ENCODE measurements at regions of chr17 and their contacts with region 1.

Region 1: GRCh38 chr17:52106638-52107261 is 51.8 kb downstream of the CA10 start:
- ATAC-seq: peak in 3 of 8 experiments; percentile 23 to 54 (median 31)
- H3K4me3 ChIP-seq: no peak overlapping the region
- H3K27ac ChIP-seq: no peak overlapping the region
- H3K4me1 ChIP-seq: peaks cover 0 to 3% of the 10 kb centered on the region in 2 donors

Region 2: DNA sequence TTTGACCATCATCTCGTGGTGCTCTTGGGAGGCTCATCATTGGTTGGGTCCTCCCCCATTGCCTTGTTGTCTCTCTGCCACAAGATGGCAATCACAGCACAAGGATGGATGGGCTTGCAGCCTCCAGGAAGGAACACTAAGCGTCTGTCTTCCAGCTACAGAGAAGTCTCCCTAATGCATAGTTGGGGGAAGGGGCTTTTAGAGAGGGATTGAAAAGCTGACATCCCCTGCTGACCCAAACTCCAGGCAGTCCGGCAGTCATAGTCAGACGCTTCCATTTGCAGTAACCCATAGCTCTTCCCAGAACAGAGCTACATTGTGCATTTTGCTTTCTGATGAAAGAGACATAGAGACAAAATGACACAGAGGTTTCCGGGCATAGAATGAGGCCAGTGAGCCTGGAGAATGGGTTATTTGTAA is 735.0 kb before region 1 on chr17:
- in situ Hi-C with region 1: loop called in 1 of 9 experiments (anchors 25 kb)
- ATAC-seq: peak; percentile 87 to 96 (median 94)
- H3K4me3 ChIP-seq: no peak overlapping the region
- H3K27ac ChIP-seq: no peak overlapping the region
- H3K4me1 ChIP-seq: peaks cover 6% of the 10 kb centered on the region in 2 donors

Region 3: GRCh38 chr17:51764387-51764972 is 342.3 kb before region 1 on chr17:
- in situ Hi-C with region 1: loop called in 2 of 9 experiments (anchors 25 kb)
- ATAC-seq: peak; percentile 70 to 98 (median 90)
- H3K4me3 ChIP-seq: no peak overlapping the region
- H3K27ac ChIP-seq: no peak overlapping the region
- H3K4me1 ChIP-seq: peaks cover 6 to 46% of the 10 kb centered on the region in 2 donors

Region 4: GRCh38 chr17:52035336-52035915 is 71.3 kb before region 1 on chr17:
- in situ Hi-C with region 1: no loop called
- ATAC-seq: peak in 1 of 8 experiments; percentile 12
- H3K4me3 ChIP-seq: no peak overlapping the region
- H3K27ac ChIP-seq: no peak overlapping the region
- H3K4me1 ChIP-seq: peaks cover 0 to 3% of the 10 kb centered on the region in 2 donors

Region 5: DNA sequence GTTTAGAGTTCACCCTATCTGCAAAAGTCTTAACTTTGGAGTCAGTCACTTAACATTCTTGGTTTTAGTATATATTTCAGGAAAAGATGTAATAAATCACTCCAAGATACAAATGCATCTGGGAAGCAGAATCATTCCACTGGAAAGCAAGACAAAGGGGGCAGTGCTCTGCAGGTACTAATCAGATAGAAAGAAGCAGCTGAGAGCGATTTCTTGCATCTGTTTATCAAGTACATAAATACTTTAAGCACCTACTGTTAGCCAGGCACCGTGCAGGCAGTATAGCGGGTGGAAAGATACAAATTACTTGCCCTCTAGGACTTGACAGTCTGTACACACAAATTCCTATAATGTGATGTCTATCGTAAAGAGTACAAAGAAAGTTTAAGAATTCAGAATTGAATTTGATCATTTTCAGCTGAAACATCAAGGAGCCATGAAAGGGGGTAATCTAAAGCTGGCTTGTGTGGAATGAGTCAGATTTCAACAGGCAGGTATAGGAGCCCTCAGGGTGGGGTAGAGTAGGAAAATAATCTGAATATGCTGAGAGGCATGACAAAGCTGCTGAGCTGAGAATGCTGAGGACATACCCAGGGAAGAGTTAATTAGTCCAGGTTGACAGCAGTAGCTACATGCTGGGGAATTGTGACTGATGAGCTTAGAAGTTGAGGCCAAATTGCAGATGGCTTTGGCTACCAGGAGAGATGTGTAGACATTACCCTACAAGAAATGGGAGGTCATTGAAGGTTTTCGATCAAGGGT is 58.4 kb before region 1 on chr17:
- in situ Hi-C with region 1: no loop called
- ATAC-seq: peak in 3 of 8 experiments; percentile 29 to 75 (median 55)
- H3K4me3 ChIP-seq: no peak overlapping the region
- H3K27ac ChIP-seq: no peak overlapping the region
- H3K4me1 ChIP-seq: no peaks in the 10 kb centered on the region

Region 6: DNA sequence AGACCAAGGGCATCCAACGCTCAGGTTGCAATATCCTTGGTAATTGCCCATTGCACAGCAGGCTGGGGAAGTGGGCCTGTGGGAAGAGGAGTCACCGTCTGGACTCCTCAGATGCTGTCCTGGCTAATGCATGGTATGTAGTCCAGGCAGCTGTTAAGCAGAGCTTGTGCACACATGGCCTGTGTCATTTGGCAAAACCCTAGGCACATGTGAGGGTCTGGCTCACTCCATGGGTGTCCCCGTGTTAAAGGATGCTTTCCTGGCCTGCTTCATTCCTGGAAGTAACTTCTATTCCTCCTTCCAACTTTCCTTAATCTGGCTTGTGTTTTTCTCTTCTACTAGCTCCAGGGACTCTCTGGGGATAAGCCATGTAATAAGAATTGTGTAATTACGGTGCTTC is 429.7 kb after region 1 on chr17:
- in situ Hi-C with region 1: no loop called
- ATAC-seq: no peak
- H3K4me3 ChIP-seq: no peak overlapping the region
- H3K27ac ChIP-seq: no peak overlapping the region
- H3K4me1 ChIP-seq: no peaks in the 10 kb centered on the region

Measured in motor neuron (in vitro differentiated cells).